ENCODE measurements at regions of chr11 and their contacts with region 1.

Region 1: DNA sequence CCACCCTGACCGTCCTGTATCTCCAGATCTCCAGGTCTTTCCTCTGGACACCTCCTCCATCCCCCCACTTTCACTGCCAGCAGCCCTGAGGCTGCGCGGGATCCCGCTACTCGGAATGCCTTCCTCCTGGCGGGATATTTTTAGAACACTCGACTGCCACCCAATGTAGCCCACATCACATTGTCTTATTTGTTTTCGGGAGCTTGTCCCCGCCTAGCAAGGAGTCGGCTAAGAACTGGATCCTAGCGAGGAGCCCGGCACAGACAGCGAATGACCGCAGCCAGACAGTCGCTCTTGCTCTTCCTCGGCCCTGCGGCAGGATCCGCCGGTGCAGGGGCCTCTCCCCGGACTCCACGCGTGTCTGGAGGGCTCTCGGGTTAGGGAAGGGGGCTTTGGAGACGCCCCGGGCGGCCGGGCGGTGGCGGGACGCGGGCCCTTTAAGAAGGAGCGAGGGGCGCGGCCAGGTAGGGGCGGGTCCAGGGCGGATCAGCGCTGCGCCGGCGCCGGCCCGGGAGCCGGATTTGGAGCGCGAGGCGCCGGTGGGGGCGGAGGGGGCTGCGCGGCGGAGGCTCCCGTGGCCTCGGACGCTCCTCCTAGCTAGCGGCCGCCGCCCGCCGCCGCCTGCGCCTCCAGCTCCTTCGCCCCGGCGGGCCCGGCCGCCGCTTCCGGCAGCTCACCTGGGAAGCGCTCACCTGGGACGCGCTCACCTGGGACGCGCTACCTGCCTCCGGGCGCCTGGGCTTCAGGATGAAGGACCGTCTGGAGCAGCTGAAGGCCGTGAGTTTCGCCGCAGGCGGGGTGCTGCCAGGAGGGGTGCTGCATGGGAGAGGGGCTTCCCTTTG is at the start of gene STX3:
- DNase-seq: peak; percentile 86
- CTCF ChIP-seq: no peak

Region 2: DNA sequence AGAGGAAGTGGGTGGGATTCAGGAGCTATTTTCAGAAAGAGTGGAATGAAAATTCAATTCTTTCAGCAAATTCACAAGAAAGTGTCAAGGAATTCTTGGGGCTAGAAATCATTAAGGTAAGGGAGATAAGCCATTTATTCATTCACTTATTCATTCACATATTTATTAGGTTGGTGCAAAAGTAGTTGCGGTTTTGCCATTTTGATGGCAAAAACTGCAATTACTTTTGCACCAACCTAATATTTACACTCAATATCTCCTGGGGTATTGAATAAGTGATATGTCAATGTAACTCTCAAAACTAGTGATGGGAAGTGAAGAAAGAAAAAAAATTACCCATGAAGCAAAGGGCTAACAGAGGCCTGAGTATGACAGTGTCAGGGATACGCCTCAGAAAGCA is 1486.9 kb before region 1 on chr11 and contains the start of gene OR10W1:
- in situ Hi-C with region 1: no loop called
- DNase-seq: no peak
- CTCF ChIP-seq: no peak

Region 3: GRCh38 chr11:59802639-59803176 is 47.6 kb after region 1 on chr11:
- in situ Hi-C with region 1: loop called (anchors 5 kb)
- DNase-seq: peak; percentile 43
- CTCF ChIP-seq: peak; percentile 67

Measured in GM13976 (cell line).